ENCODE measurements at regions of chr1 and their contacts with region 1.

Region 1: DNA sequence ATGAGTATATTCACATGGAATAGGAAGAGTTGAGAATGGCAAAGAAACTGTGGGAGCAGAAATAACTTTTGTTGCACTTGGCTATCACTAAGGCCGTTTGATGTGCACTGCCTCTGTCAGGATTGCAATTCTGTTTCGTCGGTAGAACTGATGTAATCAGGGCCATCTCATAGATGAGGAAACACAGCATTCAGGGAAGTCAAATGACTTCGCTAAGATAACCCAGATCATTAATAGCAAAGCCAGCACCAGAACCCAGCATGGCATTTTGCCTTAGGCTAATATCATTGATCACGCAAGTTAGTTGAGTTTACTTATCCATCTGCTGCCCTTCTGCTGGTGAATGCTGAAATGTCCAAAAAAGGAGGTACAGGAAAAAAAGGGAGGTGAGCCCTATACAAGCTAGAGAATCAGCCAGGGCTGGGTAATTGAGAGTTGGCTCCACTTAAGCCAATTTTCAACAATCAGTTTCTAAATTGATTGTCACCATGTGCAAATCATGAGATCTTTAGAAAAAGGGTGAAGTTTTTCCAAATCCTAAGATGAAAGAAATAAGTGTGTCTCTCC is 7.6 kb downstream of the RASSF5 start:
- DNase-seq: no peak

Region 2: DNA sequence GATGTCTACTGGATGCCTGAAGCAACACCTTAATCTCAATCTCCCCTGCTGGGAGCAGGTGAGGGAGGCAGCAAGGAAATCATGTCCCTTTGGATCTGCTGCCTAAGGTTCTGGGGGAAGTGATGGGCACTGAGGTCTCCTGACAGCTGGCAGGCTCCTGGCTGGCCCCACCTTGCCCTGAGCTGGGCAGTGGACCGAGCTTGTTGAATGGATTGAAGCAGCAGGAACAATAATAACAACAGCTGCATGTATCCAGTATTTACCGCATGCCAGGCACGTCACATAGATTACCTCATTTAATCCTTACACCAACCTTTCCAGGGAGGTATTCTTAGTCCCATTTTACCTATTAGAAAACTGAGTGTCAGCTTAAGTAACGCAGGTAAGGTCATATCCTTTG is 1595.4 kb after region 1 on chr1:
- intact Hi-C with region 1: loop called in 1 of 2 experiments (anchors 5 kb)
- DNase-seq: no peak